ENCODE measurements at regions of chr20 and their contacts with region 1.

Region 1: DNA sequence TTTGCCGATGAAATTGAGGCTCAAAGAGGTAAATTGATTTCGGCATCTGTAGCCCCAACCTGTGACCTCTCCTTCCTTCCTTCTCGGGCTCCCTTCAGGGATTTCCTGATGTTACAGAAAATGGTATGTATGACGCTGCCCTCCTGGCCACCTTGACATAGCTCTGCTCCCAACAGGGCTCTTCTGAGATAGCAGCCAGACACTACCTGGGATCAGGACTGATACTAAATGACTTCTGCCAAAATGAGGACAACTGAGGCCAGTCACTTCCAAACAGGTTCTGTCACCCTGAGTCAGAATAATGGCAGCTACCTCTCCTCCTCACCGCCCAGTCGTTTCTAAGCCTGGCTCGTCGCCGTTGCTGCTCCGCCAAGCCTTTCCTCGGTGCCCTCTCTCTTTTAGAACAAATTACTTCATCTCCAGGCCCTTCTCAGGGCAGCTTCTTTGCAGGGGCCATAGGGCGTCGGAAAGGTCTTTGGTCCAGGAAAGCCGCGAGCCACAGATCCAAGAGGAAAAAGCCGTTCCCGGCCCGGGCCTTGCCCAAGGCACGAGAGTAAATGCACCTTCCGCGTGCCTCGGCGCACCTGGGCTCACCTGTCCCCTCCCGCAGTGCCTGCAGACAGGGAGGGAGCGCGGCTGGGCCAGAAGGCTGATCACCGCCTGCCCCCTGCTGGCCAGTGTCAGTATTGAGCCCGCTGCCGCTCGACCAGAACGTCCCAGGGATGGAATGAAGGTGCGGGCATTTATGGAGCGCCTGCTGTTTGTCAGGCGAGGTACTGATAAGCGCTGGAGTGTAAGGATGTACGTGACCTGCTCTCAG is 904 bp upstream of the LPIN3 start:
- DNase-seq: peak; percentile 98 to 100
- H3K4me3 ChIP-seq: peak overlapping the region; percentile 51
- H3K4me3 Mint-ChIP-seq: peak overlapping the region; percentile 96
- H3K27ac Mint-ChIP-seq: peak overlapping the region; percentile 69
- H3K4me1 ChIP-seq: peaks cover 25% of the 10 kb centered on the region
- H3K4me1 Mint-ChIP-seq: peaks cover 21% of the 10 kb centered on the region
- H3K27me3 ChIP-seq: no peaks in the 10 kb centered on the region
- H3K27me3 Mint-ChIP-seq: no peaks in the 10 kb centered on the region
- CTCF ChIP-seq: peak; percentile 99 to 100

Region 2: DNA sequence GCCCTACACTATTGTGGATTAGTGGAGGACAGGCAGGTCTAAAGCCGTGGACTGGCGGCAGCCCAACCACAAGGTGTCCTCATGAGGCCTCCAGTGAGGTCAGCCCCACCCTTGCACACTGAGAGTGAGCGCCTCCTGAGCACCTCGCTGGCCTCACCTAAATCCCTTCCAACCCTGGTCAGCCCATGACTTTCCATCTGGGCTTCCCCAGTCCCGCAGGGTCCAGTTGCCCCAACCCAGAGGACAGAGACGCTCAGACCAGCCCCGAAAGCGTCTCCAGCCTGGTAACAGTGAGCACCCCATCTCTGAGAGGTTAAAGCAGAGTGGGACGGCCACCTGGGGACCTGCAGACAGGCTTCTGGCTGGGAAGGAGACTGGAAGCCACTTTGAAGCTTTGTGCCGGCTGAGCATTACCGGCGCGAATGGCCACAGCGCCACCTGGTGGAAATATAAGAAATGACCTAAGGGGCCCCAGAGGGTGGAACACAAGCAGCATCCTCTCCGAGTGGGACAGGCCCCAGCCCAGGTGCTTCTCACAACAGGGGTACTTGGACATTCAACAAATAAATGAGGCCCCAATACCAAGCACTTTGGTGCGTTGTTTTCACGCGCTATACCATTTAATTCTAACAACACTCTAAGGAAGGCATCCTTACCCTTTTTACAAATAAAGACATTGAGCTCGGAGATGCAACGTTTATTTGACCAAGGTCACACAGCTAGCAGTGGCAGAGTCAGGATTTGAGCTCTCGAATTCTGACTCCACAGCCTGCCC is 376.8 kb before region 1 on chr20:
- CTCF ChIA-PET with region 1: interaction called, 9 read pairs
- POLR2A ChIA-PET with region 1: no interaction called
- intact Hi-C with region 1: loop called (anchors 1 kb)
- DNase-seq: peak; percentile 91 to 96
- H3K4me3 ChIP-seq: peak overlapping the region; percentile 28
- H3K4me3 Mint-ChIP-seq: peak overlapping the region; percentile 53
- H3K27ac Mint-ChIP-seq: no peak overlapping the region
- H3K4me1 ChIP-seq: peaks cover 11% of the 10 kb centered on the region
- H3K4me1 Mint-ChIP-seq: peaks cover 10% of the 10 kb centered on the region
- H3K27me3 ChIP-seq: no peaks in the 10 kb centered on the region
- H3K27me3 Mint-ChIP-seq: peaks cover 3% of the 10 kb centered on the region
- CTCF ChIP-seq: peak; percentile 96 to 99

Region 3: DNA sequence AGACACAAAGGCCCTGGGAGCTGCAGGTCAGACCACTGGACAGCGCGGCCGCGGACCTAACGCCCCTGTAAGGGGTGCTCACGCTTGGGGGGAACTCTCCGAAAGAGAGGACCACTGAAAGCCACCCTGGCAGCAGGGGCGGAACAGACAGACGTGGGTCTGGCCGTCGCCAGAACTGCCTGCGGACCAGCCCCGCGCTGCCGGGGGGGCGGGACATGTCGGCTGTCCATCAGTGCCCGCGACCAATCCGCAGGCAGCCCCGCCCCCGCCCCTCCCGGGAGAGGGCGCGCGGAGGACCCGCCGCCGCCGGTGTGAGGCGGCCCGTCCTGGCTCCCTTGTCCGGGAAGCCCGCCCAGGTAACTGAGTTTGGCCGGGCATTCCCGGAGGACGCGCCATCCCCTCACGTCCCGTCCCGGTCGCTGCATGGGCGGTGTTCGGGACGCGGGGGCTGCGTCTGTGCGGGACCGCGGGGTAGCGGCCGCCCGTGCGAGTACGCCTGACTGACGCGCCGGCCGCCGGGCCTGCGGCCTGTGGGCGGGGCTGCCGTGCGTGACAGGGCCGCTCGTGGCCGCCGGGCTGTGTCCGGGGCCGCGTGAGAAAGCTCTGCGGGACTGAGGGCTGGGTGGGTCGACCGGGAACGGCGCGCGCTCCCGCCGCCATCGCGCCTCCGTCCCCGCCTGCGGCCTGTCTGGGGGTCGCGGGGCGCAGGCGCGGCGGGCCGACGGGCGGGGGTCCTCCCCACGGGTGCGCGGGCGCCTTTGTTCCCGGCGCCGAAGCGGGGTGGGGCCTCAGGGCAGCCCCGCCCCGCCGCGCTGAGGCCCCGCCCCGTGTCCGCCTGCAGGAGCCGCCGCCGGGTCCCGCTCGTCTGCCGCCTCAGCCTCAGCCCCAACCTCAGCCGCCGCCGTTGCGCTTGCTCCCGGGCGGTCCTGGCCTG is 202.8 kb before region 1 on chr20 and contains the start of gene PLCG1:
- CTCF ChIA-PET with region 1: interaction called, 83 read pairs
- POLR2A ChIA-PET with region 1: interaction called, 7 read pairs
- intact Hi-C with region 1: loop called (anchors 1 kb)
- DNase-seq: peak; percentile 93 to 99
- H3K4me3 ChIP-seq: peak within 1 kb of the TSS; percentile 96
- H3K4me3 Mint-ChIP-seq: peak within 1 kb of the TSS; percentile 83
- H3K27ac Mint-ChIP-seq: peak within 1 kb of the TSS; percentile 82
- H3K4me1 ChIP-seq: peaks cover 17% of the 10 kb centered on the region
- H3K4me1 Mint-ChIP-seq: peaks cover 21% of the 10 kb centered on the region
- H3K27me3 ChIP-seq: no peaks in the 10 kb centered on the region
- H3K27me3 Mint-ChIP-seq: no peaks in the 10 kb centered on the region
- CTCF ChIP-seq: no peak
- total RNA-seq, gene PLCG1: 196 and 205 TPM in 2 replicates

Region 4: GRCh38 chr20:41317536-41318270 is 22.0 kb before region 1 on chr20 and contains the start of gene ZHX3:
- CTCF ChIA-PET with region 1: interaction called, 11 read pairs
- POLR2A ChIA-PET with region 1: interaction called, 13 read pairs
- intact Hi-C with region 1: loop called (anchors 1 kb)
- DNase-seq: peak; percentile 100
- H3K4me3 ChIP-seq: peak within 1 kb of the TSS; percentile 75
- H3K4me3 Mint-ChIP-seq: peak within 1 kb of the TSS; percentile 84
- H3K27ac Mint-ChIP-seq: peak within 1 kb of the TSS; percentile 10
- H3K4me1 ChIP-seq: peaks cover 18% of the 10 kb centered on the region
- H3K4me1 Mint-ChIP-seq: peaks cover 30% of the 10 kb centered on the region
- H3K27me3 ChIP-seq: no peaks in the 10 kb centered on the region
- H3K27me3 Mint-ChIP-seq: no peaks in the 10 kb centered on the region
- CTCF ChIP-seq: no peak
- total RNA-seq, gene ZHX3: 22.9 and 24.6 TPM in 2 replicates

Region 5: DNA sequence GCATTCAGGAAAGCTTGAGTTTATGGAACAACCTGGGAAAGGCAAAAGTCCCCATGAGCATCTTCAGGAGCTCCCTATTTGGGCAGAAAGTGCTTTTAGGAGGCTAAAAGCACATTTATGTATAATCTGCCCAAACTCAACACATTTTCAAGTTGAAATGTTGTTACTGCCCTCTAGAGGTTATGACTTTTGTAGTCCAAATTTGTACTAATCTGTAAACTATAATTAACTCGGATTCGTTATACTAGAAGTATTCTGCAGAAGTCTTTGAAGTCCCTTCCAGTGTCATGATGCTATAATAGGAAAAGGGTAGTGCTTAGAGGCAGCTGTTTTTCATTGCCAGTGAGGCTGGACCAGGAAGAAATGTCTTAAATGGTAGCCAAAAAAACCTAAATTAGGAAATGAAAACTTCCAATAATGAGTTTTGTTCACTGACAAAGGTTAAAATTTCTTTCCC is 71.7 kb after region 1 on chr20:
- CTCF ChIA-PET with region 1: interaction called, 23 read pairs
- POLR2A ChIA-PET with region 1: interaction called, 7 read pairs
- intact Hi-C with region 1: loop called (anchors 1 kb)
- DNase-seq: no peak
- H3K4me3 ChIP-seq: no peak overlapping the region
- H3K4me3 Mint-ChIP-seq: no peak overlapping the region
- H3K27ac Mint-ChIP-seq: no peak overlapping the region
- H3K4me1 ChIP-seq: peaks cover 13% of the 10 kb centered on the region
- H3K4me1 Mint-ChIP-seq: peaks cover 13% of the 10 kb centered on the region
- H3K27me3 ChIP-seq: no peaks in the 10 kb centered on the region
- H3K27me3 Mint-ChIP-seq: no peaks in the 10 kb centered on the region
- CTCF ChIP-seq: peak; percentile 49 to 65

Region 6: GRCh38 chr20:41572010-41572560 is 232.4 kb after region 1 on chr20:
- CTCF ChIA-PET with region 1: interaction called, 5 read pairs
- POLR2A ChIA-PET with region 1: no interaction called
- intact Hi-C with region 1: loop called (anchors 5 kb)
- DNase-seq: peak; percentile 71 to 73
- H3K4me3 ChIP-seq: no peak overlapping the region
- H3K4me3 Mint-ChIP-seq: no peak overlapping the region
- H3K27ac Mint-ChIP-seq: no peak overlapping the region
- H3K4me1 ChIP-seq: peaks cover 19% of the 10 kb centered on the region
- H3K4me1 Mint-ChIP-seq: peaks cover 16% of the 10 kb centered on the region
- H3K27me3 ChIP-seq: no peaks in the 10 kb centered on the region
- H3K27me3 Mint-ChIP-seq: no peaks in the 10 kb centered on the region
- CTCF ChIP-seq: peak; percentile 83 to 91

Region 7: DNA sequence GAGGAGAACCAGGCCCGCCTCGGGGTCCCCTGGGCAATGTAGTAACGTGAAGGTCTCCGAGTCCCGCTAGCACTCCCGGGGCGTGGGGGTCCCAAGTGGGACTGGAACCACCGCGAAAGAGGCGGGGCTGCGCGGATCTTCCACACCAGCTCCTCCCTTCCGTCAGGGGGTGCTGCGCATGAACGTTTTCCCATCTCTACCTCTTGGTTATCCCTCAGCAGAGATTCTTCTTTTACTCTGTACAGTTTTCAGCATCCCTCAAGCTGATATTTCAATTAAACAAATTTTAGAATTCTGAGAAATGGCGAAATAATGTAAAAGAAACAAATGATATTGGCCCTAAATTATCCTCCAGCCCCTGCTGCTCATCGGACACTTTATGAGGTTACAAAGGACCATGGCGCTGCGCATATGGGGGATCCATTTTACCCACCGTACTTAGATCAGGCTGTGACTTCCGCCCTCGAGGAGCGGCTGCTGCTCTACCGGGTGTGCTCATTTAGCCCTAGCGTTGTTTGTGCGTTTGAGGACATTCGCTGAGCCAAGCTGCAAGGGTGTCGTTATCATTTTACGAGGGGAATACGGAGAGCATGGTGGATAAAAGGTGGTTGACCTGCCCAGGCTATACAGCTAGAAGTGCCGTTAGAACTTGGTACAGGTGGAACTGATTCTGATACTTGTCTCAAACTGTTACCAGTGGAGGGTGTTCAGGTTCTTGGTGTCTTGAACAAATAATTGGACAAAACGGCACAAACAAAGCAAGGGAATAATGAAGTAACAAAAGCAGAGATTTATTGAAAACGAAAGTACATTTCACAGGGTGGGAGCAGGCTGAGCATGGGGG is 353.6 kb after region 1 on chr20:
- CTCF ChIA-PET with region 1: no interaction called
- POLR2A ChIA-PET with region 1: interaction called, 4 read pairs
- intact Hi-C with region 1: loop called (anchors 2 kb)
- DNase-seq: peak; percentile 92 to 95
- H3K4me3 ChIP-seq: peak overlapping the region; percentile 43
- H3K4me3 Mint-ChIP-seq: peak overlapping the region; percentile 86
- H3K27ac Mint-ChIP-seq: peak overlapping the region; percentile 90
- H3K4me1 ChIP-seq: peaks cover 16% of the 10 kb centered on the region
- H3K4me1 Mint-ChIP-seq: peaks cover 19% of the 10 kb centered on the region
- H3K27me3 ChIP-seq: no peaks in the 10 kb centered on the region
- H3K27me3 Mint-ChIP-seq: peaks cover 2% of the 10 kb centered on the region
- CTCF ChIP-seq: peak; percentile 66 to 68